IMR-90 (cell line): ENCODE measurements at regions of chr18 and their contacts with region 1.

Region 1: GRCh38 chr18:5057386-5058348 is 139.4 kb downstream of the AKAIN1 start:
- DNase-seq: peak; percentile 31
- ATAC-seq: peak; percentile 96
- H3K4me3 ChIP-seq: no peak overlapping the region
- H3K27ac ChIP-seq: no peak overlapping the region
- H3K4me1 ChIP-seq: no peaks in the 10 kb centered on the region
- H3K27me3 ChIP-seq: no peaks in the 10 kb centered on the region
- CTCF ChIP-seq: peak; percentile 66
- POLR2A ChIP-seq: no peak
- RAD21 ChIP-seq: peak; percentile 75

Region 2: GRCh38 chr18:4106407-4107033 is 951.1 kb before region 1 on chr18:
- CTCF ChIA-PET with region 1: interaction called, 9 read pairs
- POLR2A ChIA-PET with region 1: no interaction called
- dilution Hi-C with region 1: no loop called
- in situ Hi-C with region 1: loop called (anchors 5 kb)
- intact Hi-C with region 1: loop called (anchors 1 kb)
- DNase-seq: peak; percentile 52
- ATAC-seq: peak; percentile 94
- H3K4me3 ChIP-seq: no peak overlapping the region
- H3K27ac ChIP-seq: no peak overlapping the region
- H3K4me1 ChIP-seq: no peaks in the 10 kb centered on the region
- H3K27me3 ChIP-seq: no peaks in the 10 kb centered on the region
- CTCF ChIP-seq: peak; percentile 69
- POLR2A ChIP-seq: no peak
- RAD21 ChIP-seq: peak; percentile 49; the same call in 1 of the 2 replicates